ENCODE measurements at regions of chr16 and their contacts with region 1.

Region 1: DNA sequence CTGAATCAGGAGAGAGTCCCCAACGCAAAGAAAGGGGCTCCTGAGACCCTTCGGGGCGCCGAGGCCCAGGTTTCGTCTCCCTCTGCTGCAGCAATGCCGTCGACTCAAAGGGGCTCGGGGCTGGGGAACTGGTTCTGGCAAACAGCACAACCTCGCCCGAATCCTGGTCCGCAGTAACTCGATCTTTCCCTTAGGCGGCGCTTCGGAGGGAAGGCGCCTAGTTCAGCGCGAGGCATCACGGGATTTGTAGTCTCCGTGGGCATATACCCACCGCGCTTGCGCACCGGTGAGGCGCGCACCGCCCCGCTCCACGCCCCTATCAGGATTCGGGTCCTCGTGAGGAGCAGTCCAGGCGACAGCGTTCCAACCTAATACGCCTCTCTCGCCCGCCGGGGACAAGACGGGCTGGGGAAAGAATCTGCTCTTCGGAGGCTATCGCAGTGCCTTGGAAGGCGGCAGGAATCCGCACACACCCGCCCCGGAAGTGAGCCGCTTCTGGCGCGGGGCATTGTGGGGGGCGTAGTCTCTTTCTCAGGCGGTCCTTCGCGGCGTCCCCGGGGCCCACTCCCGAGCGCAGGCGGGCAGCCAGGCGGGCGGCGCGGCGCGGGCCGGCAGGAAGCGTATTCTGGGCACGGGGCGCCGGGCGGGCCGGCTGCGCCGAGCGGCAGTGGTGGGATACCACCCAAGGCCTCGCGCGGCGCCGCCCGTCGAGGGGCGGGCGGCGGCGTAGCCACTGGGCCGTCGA is at the start of gene THAP11:
- DNase-seq: peak; percentile 92
- H3K4me3 Mint-ChIP-seq: peak within 1 kb of the TSS; percentile 93
- H3K27ac Mint-ChIP-seq: peak within 1 kb of the TSS; percentile 96
- H3K4me1 Mint-ChIP-seq: peaks cover 33% of the 10 kb centered on the region
- H3K27me3 Mint-ChIP-seq: peaks cover 5% of the 10 kb centered on the region
- total RNA-seq, gene THAP11: 43.0 and 49.5 TPM in 2 replicates

Region 2: DNA sequence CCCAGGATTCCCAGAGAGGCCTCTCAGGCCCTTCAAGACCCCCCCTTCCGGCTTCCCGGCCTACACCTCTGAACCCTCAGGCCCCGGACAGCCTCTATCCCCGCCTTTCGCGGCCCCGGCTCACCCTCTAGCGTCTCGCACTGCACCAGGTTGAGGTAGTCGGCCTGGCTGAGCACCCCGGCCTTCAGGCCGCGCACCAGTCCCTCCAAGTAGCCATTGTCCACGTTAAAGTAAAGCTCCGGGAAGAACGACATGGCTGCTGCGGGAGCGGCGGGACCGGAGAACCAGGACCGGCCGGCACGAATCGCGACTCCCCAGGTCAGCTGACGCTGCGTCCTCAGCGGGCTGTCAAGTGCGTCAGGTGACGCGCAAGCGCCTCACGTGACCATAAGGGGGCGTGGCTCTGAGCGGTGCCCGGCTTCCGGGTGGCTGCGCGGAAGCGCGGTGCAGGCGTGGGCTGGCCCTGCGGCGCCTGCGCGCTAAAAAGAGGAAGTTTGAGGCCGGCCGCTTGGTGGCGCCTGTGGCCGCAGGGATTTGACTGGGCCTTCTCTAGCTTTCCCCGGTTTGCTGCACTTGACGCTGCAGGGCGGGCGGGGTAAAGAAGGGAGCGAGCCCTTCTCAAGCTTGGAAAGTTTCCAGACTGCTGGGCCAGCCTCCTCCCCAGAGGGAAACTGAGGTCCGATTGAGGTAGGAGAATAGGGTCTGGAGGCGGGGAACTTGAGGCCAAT is 360.9 kb before region 1 on chr16 and contains the start of gene ATP6V0D1:
- intact Hi-C with region 1: loop called (anchors 2 kb)
- DNase-seq: peak; percentile 99
- H3K4me3 Mint-ChIP-seq: peak within 1 kb of the TSS; percentile 89
- H3K27ac Mint-ChIP-seq: peak within 1 kb of the TSS; percentile 97
- H3K4me1 Mint-ChIP-seq: peaks cover 17% of the 10 kb centered on the region
- H3K27me3 Mint-ChIP-seq: no peaks in the 10 kb centered on the region
- total RNA-seq, gene ATP6V0D1: 37.7 and 41.5 TPM in 2 replicates

Region 3: GRCh38 chr16:67660564-67661028 is 181.3 kb before region 1 on chr16 and contains the start of gene PARD6A:
- intact Hi-C with region 1: loop called (anchors 2 kb)
- DNase-seq: peak; percentile 96
- H3K4me3 Mint-ChIP-seq: peak within 1 kb of the TSS; percentile 92
- H3K27ac Mint-ChIP-seq: peak within 1 kb of the TSS; percentile 97
- H3K4me1 Mint-ChIP-seq: peaks cover 20% of the 10 kb centered on the region
- H3K27me3 Mint-ChIP-seq: no peaks in the 10 kb centered on the region
- total RNA-seq, gene PARD6A: 13.4 and 16.1 TPM in 2 replicates

Region 4: DNA sequence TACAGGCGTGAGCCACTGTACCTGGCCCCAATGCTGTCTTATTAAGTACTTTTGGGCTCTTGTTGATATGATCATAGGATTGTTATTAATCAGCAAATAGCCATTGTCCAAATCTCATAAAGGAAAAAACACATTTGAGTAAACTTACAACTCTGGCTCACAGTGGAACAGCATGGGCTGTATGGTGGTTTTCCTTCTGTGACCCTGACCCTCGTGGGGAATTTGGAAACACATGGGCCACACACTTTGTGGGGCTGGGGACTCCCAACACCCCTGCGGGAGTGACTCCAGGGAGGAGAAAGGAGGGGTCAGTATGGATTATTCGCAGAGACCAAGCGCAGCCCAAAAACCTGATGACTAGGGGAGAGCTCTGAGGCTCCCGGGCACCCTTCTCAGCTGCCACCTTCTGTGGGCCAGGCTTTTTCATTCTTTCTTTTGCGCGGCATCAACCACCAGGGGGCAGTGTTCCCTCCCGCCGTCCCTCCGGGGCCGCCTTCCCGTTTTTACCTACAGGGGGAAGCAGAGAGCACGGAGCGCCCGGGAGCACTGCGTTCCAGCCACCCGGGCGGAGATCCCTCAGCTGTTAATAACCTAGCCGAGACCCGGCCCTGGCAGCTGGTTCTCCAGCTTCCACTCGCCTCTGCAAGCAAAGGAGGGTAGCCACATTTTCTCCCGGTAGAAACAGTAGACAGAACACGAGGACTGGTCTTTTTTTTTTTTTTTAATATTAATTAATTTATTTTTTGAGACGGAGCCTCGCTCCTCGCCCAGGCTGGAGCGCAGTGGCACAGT is 25.5 kb before region 1 on chr16:
- intact Hi-C with region 1: loop called (anchors 1 kb)
- DNase-seq: peak; percentile 88
- H3K4me3 Mint-ChIP-seq: no peak overlapping the region
- H3K27ac Mint-ChIP-seq: no peak overlapping the region
- H3K4me1 Mint-ChIP-seq: peaks cover 8% of the 10 kb centered on the region
- H3K27me3 Mint-ChIP-seq: peaks cover 10% of the 10 kb centered on the region

Region 5: DNA sequence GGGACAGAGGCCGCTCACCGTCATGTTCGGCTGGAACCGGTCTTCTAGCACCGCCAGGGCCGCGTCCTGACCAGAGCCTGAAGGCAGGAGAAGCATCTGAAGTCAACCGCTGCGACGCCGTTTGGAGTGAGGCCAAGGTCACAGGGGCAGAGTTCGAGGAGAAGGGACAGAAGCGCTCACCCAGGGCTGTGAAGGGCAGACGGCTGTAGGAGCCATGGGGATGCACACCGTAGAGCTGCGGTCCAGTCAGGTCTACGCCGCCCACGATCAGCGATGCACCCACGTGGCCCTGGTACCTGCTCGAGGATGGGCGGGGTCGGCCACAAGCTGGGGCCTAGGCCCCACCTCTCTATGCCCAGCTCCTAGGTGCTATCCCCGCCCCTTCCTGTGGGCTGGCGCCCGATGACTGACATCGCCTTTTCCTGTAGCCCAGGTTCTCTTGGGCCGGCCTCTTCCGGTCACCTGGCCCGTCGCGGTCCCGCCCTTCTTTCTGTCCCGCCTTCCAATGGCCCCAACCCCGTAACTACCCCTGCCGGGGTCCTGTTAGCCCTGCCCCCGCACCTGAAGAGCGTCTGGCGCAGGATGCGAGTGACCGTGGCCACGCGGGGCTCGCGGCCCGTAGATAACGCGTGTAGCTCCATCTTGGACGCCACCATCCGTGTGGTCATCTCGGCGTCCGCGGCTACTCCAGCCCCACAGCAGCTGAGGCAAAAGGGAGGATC is 93.6 kb after region 1 on chr16:
- intact Hi-C with region 1: loop called (anchors 1 kb)
- DNase-seq: peak; percentile 92
- H3K4me3 Mint-ChIP-seq: peak overlapping the region; percentile 98
- H3K27ac Mint-ChIP-seq: peak overlapping the region; percentile 96
- H3K4me1 Mint-ChIP-seq: peaks cover 37% of the 10 kb centered on the region
- H3K27me3 Mint-ChIP-seq: no peaks in the 10 kb centered on the region

Region 6: DNA sequence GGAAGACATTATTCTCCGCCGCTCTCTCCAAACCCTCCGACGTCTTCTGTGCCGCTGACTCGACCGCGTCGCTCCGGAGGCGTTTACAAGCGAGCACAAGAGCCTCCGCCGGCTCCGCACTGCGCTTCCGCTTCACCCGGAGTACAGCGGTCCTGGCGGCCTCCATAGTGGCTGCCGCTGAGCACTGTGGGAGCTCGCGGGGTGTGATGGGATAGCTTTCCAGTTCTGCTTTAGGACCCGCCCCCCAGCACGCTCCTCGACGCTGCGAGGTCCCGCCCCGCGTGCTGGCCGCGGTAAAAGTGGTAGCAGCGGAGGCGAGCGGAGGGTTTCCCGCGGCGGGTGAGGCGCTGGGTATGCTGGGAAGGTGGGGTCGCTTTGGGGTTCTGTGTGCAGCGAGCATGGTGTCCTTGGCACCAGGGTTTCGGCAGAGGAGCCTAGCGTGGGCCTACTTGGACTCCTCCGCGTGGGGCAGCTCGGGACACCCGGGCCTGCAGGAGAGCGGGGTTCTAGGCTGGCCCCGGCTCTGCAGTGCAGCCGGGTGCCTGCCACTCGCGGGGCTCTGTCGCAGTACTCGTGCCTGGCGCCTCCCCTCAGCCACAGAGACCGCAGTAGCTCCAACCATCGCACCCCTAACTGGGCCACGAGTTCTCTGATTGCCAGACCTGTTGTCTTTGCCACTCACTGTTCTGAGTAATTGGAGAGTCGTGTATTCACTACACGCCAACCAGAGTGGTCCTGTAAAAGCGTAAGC is 469.0 kb after region 1 on chr16 and contains the starts of genes PRMT7 and SLC7A6OS:
- intact Hi-C with region 1: loop called (anchors 10 kb)
- DNase-seq: peak; percentile 92
- H3K4me3 Mint-ChIP-seq: peak within 1 kb of the TSS; percentile 99
- H3K27ac Mint-ChIP-seq: peak within 1 kb of the TSS; percentile 98
- H3K4me1 Mint-ChIP-seq: peaks cover 43% of the 10 kb centered on the region
- H3K27me3 Mint-ChIP-seq: no peaks in the 10 kb centered on the region
- total RNA-seq, gene PRMT7: 80.6 and 85.2 TPM in 2 replicates
- total RNA-seq, gene SLC7A6OS: 26.5 and 27.6 TPM in 2 replicates